Heart right ventricle (tissue), 16 donors: ENCODE measurements at regions of chrX and their contacts with region 1.

Region 1: DNA sequence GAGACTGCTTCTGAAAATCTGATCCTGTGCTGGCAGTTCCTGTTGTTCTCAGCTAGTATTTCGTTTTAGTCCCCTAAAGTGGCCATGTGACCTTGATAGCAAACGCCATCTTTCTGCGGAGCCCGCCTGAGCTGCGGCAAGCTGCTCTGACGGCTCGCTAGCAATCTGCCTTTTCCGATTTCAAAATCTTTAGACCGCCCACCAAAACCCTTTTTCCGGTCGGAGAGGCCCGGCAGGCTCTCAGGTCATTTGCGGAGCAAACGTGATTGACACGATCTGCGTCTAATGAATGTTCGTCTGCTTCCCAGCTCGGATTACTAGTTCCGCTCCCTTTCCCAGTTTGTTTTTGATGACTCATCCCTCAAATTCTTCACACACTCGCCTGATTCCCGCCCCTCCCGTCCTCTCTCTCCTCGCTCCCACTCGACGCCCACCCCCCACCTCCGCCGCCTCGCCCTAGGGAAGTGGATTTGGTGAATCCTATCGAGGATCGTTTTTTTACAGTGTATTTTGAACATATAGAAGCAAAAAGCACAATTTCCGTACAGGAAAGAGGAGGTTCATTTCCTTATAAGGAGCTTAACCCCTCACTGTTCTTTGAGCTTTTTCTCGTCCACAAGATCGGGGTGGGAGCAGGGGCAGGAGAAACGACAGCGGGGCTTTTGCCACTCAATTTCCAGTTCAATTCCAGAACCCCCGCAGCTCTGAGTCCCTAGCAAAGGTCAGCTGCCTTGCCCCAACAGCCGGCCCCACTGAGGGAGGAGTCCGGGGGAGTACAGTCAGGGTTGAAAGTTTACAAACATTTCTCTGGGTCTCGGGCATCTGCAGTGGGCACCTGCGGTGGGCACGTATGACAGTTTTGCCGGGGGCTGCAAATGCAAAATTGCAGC is 37.5 kb downstream of the NLGN3 start:
- DNase-seq: peak; percentile 73 to 92
- ATAC-seq: peak; percentile 89 to 98 (median 96)
- H3K4me3 ChIP-seq: peak overlapping the region in 9 of 10 donors; percentile 17 to 61 (median 49)
- H3K27ac ChIP-seq: peak overlapping the region; percentile 63 to 93 (median 84)
- H3K4me1 ChIP-seq: peaks cover 0 to 6% (median 0%) of the 10 kb centered on the region in 9 donors
- H3K27me3 ChIP-seq: peaks cover 0 to 8% (median 0%) of the 10 kb centered on the region in 7 donors
- CTCF ChIP-seq: no peak

Region 2: GRCh38 chrX:70960728-70961127 is 221.4 kb before region 1 on chrX:
- intact Hi-C with region 1: loop called in 1 of 10 experiments (anchors 10 kb)
- DNase-seq: no peak
- ATAC-seq: no peak
- H3K4me3 ChIP-seq: no peak overlapping the region
- H3K27ac ChIP-seq: no peak overlapping the region
- H3K4me1 ChIP-seq: no peaks in the 10 kb centered on the region
- H3K27me3 ChIP-seq: peaks cover 0 to 46% (median 0%) of the 10 kb centered on the region in 7 donors
- CTCF ChIP-seq: no peak

Region 3: DNA sequence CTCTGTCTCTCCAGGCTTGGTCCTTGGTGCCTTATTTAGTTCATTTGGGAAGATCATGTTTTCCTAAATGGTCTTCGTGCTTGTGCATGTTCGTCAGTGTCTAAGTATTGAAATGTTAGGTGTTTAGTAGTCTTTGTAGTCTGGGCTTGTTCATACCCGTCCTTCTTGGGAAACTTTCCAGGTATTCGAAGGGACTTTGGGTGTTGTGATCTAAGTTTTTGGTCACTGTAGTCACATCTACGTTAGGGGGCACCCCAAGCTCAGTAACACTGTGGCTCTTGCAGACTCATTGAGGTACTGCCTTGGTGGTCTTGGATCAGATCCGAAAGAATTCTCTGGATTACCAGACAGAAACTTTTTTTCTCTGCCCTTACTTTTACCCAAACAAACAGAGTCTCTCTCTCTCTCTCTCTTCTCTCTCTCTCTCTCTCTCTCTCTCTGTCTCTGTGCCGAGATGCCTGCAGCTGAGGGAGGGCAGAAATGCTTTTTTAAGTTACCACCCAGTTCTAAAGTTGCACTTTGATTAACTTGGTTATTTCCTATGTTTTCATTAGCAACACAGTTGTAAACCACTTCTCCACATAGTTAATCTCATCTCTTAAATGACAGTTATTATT is 183.6 kb before region 1 on chrX:
- intact Hi-C with region 1: loop called in 3 of 10 experiments (anchors 2 to 10 kb)
- DNase-seq: peak in 1 of 2 donors; percentile 10
- ATAC-seq: no peak
- H3K4me3 ChIP-seq: no peak overlapping the region
- H3K27ac ChIP-seq: no peak overlapping the region
- H3K4me1 ChIP-seq: no peaks in the 10 kb centered on the region
- H3K27me3 ChIP-seq: peaks cover 0 to 11% (median 0%) of the 10 kb centered on the region in 7 donors
- CTCF ChIP-seq: peak in 4 of 9 donors; percentile 16 to 44 (median 30)

Region 4: DNA sequence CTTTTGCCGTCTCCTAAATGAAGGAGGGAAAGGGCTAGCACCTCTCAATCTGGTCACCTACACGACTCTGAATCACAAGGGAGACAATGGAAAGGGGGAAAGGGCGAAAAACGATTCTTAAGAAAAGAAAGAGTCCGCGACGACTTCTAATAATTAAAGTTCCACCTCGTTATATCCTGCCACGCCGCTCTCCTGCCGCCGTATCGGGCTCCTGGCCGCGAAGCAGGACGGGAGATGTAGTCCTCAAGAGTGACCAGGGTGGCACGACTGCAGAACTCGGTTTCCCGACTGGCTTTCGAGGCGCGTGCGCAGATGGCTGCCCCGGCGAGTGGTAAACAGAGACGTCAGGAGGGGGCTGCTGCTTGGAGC is 86.6 kb before region 1 on chrX and contains the start of gene FOXO4:
- intact Hi-C with region 1: loop called in 1 of 10 experiments (anchors 5 kb)
- DNase-seq: peak; percentile 90 to 92
- ATAC-seq: peak; percentile 94 to 97 (median 96)
- H3K4me3 ChIP-seq: peak within 1 kb of the TSS; percentile 41 to 67 (median 62)
- H3K27ac ChIP-seq: peak within 1 kb of the TSS in 9 of 10 donors; percentile 6 to 77 (median 48)
- H3K4me1 ChIP-seq: peaks cover 0 to 20% (median 9%) of the 10 kb centered on the region in 9 donors
- H3K27me3 ChIP-seq: peaks cover 0 to 33% (median 0%) of the 10 kb centered on the region in 7 donors
- CTCF ChIP-seq: no peak
- total RNA-seq, gene FOXO4: 29.5 to 67.8 (median 37.5) TPM

Region 5: GRCh38 chrX:71118032-71118984 is 63.8 kb before region 1 on chrX and contains the start of gene MED12:
- intact Hi-C with region 1: no loop called
- DNase-seq: peak; percentile 84 to 89
- ATAC-seq: peak; percentile 97 to 100 (median 99)
- H3K4me3 ChIP-seq: peak within 1 kb of the TSS; percentile 38 to 72 (median 64)
- H3K27ac ChIP-seq: peak within 1 kb of the TSS; percentile 40 to 91 (median 78)
- H3K4me1 ChIP-seq: peaks cover 0 to 15% (median 5%) of the 10 kb centered on the region in 9 donors
- H3K27me3 ChIP-seq: peaks cover 0 to 3% (median 0%) of the 10 kb centered on the region in 7 donors
- CTCF ChIP-seq: no peak
- total RNA-seq, gene MED12: 22.4 to 35.1 (median 28.9) TPM

Region 6: DNA sequence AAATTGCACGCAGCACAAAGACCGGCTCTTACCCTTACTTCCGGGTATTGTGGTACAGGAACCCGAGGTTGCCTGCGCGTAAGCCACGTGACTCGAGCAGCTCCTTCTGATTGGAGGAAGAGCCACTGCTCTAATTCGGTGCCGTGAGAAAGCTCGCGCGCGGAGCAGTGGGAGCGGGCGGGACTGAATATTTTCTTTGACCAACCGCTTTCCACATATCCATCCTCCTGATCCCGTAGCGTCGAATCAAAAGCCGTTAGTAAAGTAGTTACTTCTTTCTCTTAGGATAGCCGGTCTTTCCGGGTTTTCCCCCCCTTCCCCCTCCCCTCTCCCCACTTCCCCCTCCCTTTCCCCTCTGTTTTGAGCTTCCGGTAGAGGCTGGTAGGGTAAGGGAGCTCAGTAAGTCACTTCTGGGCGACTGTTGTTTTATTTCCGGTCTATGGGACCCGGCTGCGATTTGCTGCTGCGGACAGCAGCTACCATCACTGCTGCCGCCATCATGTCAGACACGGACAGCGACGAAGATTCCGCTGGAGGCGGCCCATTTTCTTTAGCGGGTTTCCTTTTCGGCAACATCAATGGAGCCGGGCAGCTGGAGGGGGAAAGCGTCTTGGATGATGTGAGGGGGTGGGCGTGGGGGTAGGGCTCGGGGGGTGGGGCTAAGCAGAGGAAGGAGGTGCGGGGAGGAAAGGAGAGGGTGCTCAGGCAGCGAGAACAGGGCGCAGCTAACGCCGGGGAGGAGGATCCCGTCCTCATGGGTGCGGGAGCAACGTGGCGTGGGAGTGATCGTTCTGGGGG is 183.9 kb after region 1 on chrX and contains the start of gene TAF1:
- intact Hi-C with region 1: loop called in 2 of 10 experiments (anchors 5 to 10 kb)
- DNase-seq: peak; percentile 89 to 95
- ATAC-seq: peak; percentile 94 to 98 (median 96)
- H3K4me3 ChIP-seq: peak within 1 kb of the TSS; percentile 37 to 88 (median 68)
- H3K27ac ChIP-seq: peak within 1 kb of the TSS; percentile 80 to 96 (median 92)
- H3K4me1 ChIP-seq: peaks cover 0 to 33% (median 13%) of the 10 kb centered on the region in 9 donors
- H3K27me3 ChIP-seq: no peaks in the 10 kb centered on the region
- CTCF ChIP-seq: no peak
- total RNA-seq, gene TAF1: 16.1 to 27.1 (median 21.6) TPM